ENCODE measurements at regions of chr4 and their contacts with region 1.

Region 1: DNA sequence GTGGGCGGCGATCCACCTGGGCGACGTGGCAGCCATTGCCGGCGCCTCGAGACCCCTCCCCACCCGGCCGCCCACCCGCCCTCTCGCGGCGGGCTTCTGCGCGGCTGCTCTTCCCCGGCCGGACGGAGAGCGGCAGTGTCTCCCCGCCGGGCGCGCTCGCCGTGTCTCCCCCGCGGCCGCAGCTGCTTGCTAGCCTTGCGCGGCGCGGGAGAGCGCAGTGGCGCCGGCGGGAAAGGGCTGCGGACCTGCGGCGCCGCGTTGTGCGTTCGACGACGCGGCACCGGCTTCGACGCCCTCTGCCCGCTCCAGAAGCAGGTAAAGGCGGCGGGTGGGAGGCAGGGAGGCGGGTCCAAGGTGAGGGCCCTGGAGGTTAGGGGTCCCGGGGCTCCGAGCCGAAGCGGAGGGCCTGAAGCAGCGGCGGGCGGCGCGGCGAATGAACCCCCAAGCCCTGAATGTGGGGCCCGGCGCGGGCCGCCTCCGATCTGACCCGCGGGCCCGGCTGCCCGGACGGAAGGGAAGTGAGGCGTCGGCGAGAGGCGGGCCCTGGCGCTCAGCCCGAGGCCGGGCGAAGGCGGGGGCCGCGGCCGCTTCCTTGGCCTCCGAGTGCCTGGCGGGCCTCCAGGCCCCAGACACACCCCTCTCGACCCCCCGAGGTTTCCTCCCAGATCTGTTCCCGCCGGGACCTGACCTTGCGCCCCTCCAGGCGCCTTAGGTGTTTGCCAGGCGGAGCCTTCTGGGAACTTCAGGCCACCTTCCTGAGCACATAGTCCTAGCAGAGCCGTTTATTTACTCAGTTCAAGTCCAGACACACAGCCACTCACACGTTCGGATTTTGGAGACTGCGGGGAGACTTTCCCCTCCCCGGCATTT is at the start of gene N4BP2:
- DNase-seq: peak; percentile 67
- H3K4me3 Mint-ChIP-seq: peak within 1 kb of the TSS; percentile 96
- H3K27ac Mint-ChIP-seq: peak within 1 kb of the TSS; percentile 100
- H3K4me1 Mint-ChIP-seq: peaks cover 40% of the 10 kb centered on the region
- H3K27me3 Mint-ChIP-seq: no peaks in the 10 kb centered on the region
- total RNA-seq, gene N4BP2: 28.7 and 29.0 TPM in 2 replicates

Region 2: GRCh38 chr4:39527273-39528060 is 529.5 kb before region 1 on chr4 and contains the start of gene UGDH:
- intact Hi-C with region 1: loop called (anchors 2 kb)
- DNase-seq: peak; percentile 91
- H3K4me3 Mint-ChIP-seq: peak within 1 kb of the TSS; percentile 99
- H3K27ac Mint-ChIP-seq: peak within 1 kb of the TSS; percentile 92
- H3K4me1 Mint-ChIP-seq: peaks cover 19% of the 10 kb centered on the region
- H3K27me3 Mint-ChIP-seq: no peaks in the 10 kb centered on the region
- total RNA-seq, gene UGDH: 26.0 and 30.6 TPM in 2 replicates

Region 3: GRCh38 chr4:39977489-39978377 is 79.2 kb before region 1 on chr4 and contains the start of gene PDS5A:
- intact Hi-C with region 1: loop called (anchors 1 kb)
- DNase-seq: peak; percentile 90
- H3K4me3 Mint-ChIP-seq: peak within 1 kb of the TSS; percentile 95
- H3K27ac Mint-ChIP-seq: peak within 1 kb of the TSS; percentile 94
- H3K4me1 Mint-ChIP-seq: peaks cover 33% of the 10 kb centered on the region
- H3K27me3 Mint-ChIP-seq: no peaks in the 10 kb centered on the region
- total RNA-seq, gene PDS5A: 129 and 131 TPM in 2 replicates

Region 4: DNA sequence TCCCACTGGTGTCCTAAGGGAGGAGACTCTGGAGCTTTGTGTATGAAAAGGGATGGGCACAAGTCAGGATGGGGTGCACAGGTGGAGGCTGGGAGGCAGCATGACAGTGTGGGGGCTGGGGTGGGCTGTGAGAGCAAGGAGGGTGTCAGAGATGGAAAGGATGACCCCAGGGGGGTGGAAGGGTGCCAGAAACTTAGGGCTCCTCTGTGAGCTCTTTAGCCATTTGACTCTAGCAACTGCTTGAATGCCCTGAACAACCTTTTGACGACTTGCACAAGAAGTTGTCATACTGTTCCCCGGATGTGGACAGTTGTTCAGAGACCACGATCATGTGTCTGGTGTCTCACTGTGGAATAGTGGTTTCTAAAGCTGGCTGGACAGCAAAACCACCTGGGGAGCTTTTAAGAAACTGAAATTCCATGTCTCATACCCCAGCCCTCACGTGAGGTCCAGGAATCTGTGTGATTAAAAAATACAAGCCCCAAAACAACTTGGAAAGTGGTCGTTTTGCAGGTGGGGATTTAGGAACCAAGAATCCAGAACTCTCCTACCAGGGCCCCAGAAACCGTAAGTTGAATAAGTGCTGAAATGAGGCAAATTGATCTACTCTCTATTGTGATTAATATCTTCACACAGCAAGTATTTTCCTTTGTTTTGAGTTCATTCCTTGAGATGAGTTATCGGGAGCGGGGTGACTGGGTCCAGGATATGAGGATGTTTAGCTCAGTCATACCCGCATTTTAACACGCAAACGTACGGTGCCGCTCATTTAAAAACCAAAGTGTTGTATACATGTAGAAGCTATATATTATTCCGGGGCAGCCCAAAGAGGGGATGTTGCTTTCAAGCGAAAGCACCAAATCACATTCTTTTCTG is 143.3 kb after region 1 on chr4:
- intact Hi-C with region 1: loop called (anchors 1 kb)
- DNase-seq: peak; percentile 76
- H3K4me3 Mint-ChIP-seq: peak overlapping the region; percentile 95
- H3K27ac Mint-ChIP-seq: peak overlapping the region; percentile 97
- H3K4me1 Mint-ChIP-seq: peaks cover 60% of the 10 kb centered on the region
- H3K27me3 Mint-ChIP-seq: no peaks in the 10 kb centered on the region

Region 5: DNA sequence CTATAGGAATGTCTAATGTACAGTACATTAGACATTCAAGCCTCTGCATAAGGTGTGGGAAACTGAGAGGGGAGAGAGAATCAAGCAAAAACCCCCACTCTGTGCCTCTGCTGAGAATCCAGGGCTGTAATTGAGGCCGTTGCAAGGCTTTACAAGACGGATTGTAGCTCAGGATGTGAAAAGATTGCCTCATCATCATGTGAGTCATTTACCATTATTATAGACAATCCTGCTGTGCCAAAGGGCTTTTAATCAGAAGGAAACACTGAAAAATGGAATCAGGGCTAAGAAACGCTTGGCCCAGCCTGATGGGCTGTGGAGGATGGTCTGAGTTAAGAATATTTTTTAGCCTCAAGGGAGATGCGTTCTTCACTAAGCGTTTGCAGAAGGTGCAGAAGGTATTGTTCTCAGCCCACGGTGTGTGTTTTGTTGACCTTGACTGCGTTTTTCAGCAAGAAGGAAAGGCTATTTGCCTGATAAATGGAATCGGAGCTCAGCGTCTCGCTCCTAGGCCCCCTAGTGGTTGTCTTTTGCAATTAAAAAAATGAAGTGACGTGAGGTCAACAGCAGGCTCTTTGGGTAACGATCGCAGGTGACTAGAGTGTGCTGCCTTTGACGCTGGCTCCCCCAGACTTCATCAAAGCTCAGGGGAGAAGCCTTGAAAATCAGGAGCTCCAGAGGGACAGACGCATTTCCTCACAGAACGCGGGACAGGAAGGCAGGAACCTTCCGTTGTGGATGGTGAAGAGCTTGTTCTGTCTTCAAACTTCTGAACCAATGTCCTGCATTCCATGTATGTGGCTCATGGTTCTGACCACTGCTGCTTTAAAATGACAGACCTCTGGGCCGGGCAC is 260.1 kb after region 1 on chr4:
- intact Hi-C with region 1: loop called (anchors 1 kb)
- DNase-seq: peak; percentile 59
- H3K4me3 Mint-ChIP-seq: peak overlapping the region; percentile 83
- H3K27ac Mint-ChIP-seq: peak overlapping the region; percentile 99
- H3K4me1 Mint-ChIP-seq: peaks cover 58% of the 10 kb centered on the region
- H3K27me3 Mint-ChIP-seq: no peaks in the 10 kb centered on the region

Region 6: DNA sequence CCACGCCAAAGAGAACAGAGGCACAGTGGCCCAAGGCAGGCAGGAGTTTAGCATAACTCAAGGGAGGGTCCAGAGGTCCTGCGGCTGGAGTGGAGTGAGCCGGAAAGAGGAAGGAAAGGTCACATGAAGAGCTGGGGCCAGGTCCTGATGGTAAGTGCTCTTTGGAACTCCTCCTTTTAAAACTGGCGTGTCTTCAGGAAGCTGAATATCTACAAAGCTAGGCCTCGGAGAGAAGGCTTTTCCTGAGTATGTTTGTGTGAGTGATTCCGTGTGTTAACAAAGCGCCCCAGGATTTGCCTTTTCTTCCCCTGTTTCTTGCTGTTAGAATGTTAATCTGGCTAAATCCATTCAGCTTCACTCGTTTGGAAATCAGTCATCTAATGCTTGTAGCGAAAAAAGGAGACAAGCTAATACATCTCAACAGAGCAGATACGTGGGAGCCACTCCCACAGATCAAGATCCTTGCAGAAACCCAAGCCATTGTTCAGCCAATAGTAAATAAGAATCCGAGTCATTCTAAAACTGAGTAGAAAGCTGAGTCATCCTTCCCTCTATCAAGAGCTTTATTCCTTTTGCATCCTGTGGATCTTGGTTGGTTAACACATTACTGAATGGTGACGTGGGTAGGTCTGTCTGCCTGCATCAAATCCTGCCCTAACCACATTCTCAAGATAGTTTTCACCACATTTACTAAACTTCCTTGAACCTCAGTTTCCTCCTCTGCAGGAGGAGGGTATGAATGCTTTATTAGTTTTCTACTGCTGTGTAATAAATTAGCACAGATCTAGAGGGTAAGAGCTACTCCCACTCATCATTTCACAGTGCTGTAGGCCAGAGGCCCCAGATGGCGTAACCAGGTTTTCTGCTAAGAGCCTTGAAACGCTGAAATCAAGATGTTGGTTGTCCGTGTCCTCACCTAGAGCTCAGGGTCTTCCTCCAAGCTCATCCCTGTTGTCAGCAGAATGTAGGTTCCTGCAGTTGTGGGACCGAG is 615.9 kb after region 1 on chr4:
- intact Hi-C with region 1: loop called (anchors 5 kb)
- DNase-seq: peak; percentile 59
- H3K4me3 Mint-ChIP-seq: peak overlapping the region; percentile 57
- H3K27ac Mint-ChIP-seq: peak overlapping the region; percentile 86
- H3K4me1 Mint-ChIP-seq: peaks cover 68% of the 10 kb centered on the region
- H3K27me3 Mint-ChIP-seq: no peaks in the 10 kb centered on the region